ENCODE measurements at regions of chr6 and their contacts with region 1.

Region 1: DNA sequence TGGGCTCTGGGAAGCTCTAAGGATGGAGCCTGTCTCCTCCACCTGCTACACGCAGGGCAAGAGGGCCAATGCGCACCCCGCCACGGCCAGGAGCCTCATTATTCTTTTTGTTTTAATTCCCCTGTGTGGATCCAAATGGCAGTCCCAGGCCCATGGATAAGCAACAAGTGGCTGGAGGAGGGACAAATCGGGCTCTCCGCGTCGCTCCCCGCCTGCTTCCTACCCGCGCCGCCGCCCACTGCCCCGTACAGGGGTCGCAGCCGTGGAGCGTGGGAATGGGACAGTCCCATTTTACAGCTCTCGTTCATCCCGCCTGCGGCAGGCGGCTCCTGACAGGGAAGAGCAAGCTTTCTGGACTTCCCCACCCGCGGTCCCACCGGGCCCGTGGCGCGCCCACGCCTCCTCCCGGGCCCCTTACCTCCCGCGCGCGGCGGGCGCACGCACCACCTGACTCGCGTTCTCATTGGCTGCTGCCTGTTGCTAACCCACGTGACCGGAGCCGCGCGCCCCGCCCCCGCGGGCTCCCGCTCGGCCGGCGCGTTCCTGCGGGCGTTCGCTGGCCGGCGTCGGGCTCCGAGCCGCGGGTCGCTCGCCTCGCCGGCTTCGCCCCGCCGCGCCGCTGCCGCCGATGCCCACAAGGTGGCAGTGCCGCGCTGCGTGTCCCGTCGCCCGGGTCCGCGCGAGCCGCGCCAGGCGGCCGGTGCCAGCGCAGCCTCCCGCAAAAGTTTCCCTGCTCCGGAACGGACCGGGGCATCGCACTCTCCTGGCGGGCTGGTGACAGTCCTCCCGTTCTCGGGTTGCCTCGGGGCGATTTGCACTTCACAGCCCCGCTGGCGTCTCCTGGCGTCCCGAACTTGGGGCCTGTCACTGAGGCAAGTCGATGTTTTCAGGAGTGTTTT is 93.3 kb downstream of the CD83 start:
- DNase-seq: peak; percentile 96
- ATAC-seq: peak; percentile 91
- H3K4me3 ChIP-seq: peak overlapping the region; percentile 3 to 92 (median 82)
- H3K4me3 Mint-ChIP-seq: peak overlapping the region; percentile 90
- H3K27ac ChIP-seq: peak overlapping the region; percentile 92 to 97
- H3K27ac Mint-ChIP-seq: peak overlapping the region; percentile 97
- H3K4me1 ChIP-seq: peaks cover 30 to 33% of the 10 kb centered on the region in 2 donors
- H3K4me1 Mint-ChIP-seq: peaks cover 44% of the 10 kb centered on the region
- H3K27me3 ChIP-seq: no peaks in the 10 kb centered on the region
- H3K27me3 Mint-ChIP-seq: no peaks in the 10 kb centered on the region
- CTCF ChIP-seq: peak; percentile 72

Region 2: DNA sequence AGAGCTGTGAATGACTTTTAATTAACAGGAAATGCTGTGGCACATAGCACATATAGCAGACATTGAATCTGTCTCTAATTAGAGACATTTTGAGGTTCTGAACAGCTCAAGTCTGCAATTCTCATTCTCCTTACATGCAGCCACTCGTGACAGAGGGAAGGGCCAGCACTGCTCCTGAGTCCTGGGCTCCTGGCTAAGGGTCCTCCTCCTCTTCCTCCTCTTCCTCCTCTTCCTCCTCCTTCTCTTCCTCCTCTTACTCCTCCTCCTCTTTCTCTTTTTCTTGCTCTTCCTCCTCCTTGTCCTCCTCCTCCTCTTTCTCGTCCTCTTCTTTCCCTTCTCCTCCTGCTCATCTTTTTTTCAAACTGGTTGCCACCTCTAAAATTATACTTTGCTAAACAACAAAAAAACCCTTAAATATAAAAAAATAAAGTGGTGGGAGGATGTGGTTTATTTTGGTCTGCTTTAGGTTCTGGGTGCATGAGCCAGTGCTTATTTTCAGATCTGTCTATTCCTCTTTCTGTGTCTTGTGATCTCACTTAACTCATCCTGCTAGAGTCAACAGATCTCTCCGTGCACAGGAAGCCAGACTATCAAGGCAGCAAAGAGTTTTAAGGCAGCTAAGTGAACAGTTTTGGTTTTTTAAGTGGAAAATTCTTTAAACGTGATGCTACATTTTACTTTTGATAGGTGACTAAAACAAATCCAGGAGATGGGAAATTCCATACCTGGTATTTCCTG is 65.9 kb after region 1 on chr6:
- CTCF ChIA-PET with region 1: interaction called, 4 read pairs
- POLR2A ChIA-PET with region 1: no interaction called
- intact Hi-C with region 1: loop called (anchors 5 kb)
- DNase-seq: peak; percentile 82
- ATAC-seq: peak; percentile 92
- H3K4me3 ChIP-seq: peak overlapping the region in 4 of 5 experiments; percentile 19 to 50 (median 24)
- H3K4me3 Mint-ChIP-seq: peak overlapping the region; percentile 58
- H3K27ac ChIP-seq: peak overlapping the region; percentile 97 to 99
- H3K27ac Mint-ChIP-seq: peak overlapping the region; percentile 92
- H3K4me1 ChIP-seq: peaks cover 61 to 79% of the 10 kb centered on the region in 2 donors
- H3K4me1 Mint-ChIP-seq: peaks cover 75% of the 10 kb centered on the region
- H3K27me3 ChIP-seq: no peaks in the 10 kb centered on the region
- H3K27me3 Mint-ChIP-seq: no peaks in the 10 kb centered on the region
- CTCF ChIP-seq: no peak

Region 3: DNA sequence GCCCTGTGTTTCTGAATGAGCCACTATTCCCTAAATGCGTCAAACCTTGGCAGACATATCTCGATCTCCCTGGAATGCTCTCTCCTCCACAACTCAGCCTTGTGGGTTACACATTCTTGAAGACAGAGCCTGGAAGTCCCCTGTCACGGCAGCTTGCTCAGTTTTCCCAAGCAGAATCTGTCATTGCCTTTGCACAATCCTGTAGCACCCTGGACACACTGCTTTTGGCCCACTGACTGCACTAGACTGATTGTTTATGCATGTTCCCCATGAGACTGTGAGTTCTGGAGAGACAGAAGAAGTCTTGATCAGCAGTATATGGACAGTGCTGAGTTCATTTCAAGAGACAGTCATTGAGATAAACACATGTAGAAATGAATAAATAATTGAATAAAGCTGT is 313.4 kb after region 1 on chr6:
- CTCF ChIA-PET with region 1: no interaction called
- POLR2A ChIA-PET with region 1: no interaction called
- intact Hi-C with region 1: no loop called
- DNase-seq: no peak
- ATAC-seq: no peak
- H3K4me3 ChIP-seq: no peak overlapping the region
- H3K4me3 Mint-ChIP-seq: no peak overlapping the region
- H3K27ac ChIP-seq: no peak overlapping the region
- H3K27ac Mint-ChIP-seq: no peak overlapping the region
- H3K4me1 ChIP-seq: no peaks in the 10 kb centered on the region
- H3K4me1 Mint-ChIP-seq: peaks cover 1% of the 10 kb centered on the region
- H3K27me3 ChIP-seq: no peaks in the 10 kb centered on the region
- H3K27me3 Mint-ChIP-seq: no peaks in the 10 kb centered on the region
- CTCF ChIP-seq: no peak

Region 4: GRCh38 chr6:14638906-14639761 is 428.2 kb after region 1 on chr6:
- CTCF ChIA-PET with region 1: interaction called, 4 read pairs
- POLR2A ChIA-PET with region 1: interaction called, 4 read pairs
- intact Hi-C with region 1: loop called (anchors 1 kb)
- DNase-seq: peak; percentile 79
- ATAC-seq: peak; percentile 60
- H3K4me3 ChIP-seq: peak overlapping the region; percentile 21 to 74 (median 25)
- H3K4me3 Mint-ChIP-seq: peak overlapping the region; percentile 85
- H3K27ac ChIP-seq: peak overlapping the region; percentile 94
- H3K27ac Mint-ChIP-seq: peak overlapping the region; percentile 98
- H3K4me1 ChIP-seq: peaks cover 77 to 81% of the 10 kb centered on the region in 2 donors
- H3K4me1 Mint-ChIP-seq: peaks cover 87% of the 10 kb centered on the region
- H3K27me3 ChIP-seq: no peaks in the 10 kb centered on the region
- H3K27me3 Mint-ChIP-seq: no peaks in the 10 kb centered on the region
- CTCF ChIP-seq: no peak

Region 5: GRCh38 chr6:14903176-14904038 is 692.5 kb after region 1 on chr6:
- CTCF ChIA-PET with region 1: no interaction called
- POLR2A ChIA-PET with region 1: interaction called, 10 read pairs
- intact Hi-C with region 1: no loop called
- DNase-seq: peak; percentile 46
- ATAC-seq: peak; percentile 43
- H3K4me3 ChIP-seq: no peak overlapping the region
- H3K4me3 Mint-ChIP-seq: peak overlapping the region; percentile 17
- H3K27ac ChIP-seq: peak overlapping the region; percentile 36 to 57
- H3K27ac Mint-ChIP-seq: peak overlapping the region; percentile 59
- H3K4me1 ChIP-seq: peaks cover 16 to 18% of the 10 kb centered on the region in 2 donors
- H3K4me1 Mint-ChIP-seq: peaks cover 27% of the 10 kb centered on the region
- H3K27me3 ChIP-seq: no peaks in the 10 kb centered on the region
- H3K27me3 Mint-ChIP-seq: no peaks in the 10 kb centered on the region
- CTCF ChIP-seq: no peak

Region 6: GRCh38 chr6:15491255-15491985 is 1280.5 kb after region 1 on chr6:
- CTCF ChIA-PET with region 1: interaction called, 3 read pairs
- POLR2A ChIA-PET with region 1: no interaction called
- intact Hi-C with region 1: loop called (anchors 1 kb)
- DNase-seq: peak; percentile 77
- ATAC-seq: peak; percentile 77
- H3K4me3 ChIP-seq: no peak overlapping the region
- H3K4me3 Mint-ChIP-seq: no peak overlapping the region
- H3K27ac ChIP-seq: no peak overlapping the region
- H3K27ac Mint-ChIP-seq: peak overlapping the region; percentile 51
- H3K4me1 ChIP-seq: peaks cover 15 to 18% of the 10 kb centered on the region in 2 donors
- H3K4me1 Mint-ChIP-seq: peaks cover 33% of the 10 kb centered on the region
- H3K27me3 ChIP-seq: no peaks in the 10 kb centered on the region
- H3K27me3 Mint-ChIP-seq: no peaks in the 10 kb centered on the region
- CTCF ChIP-seq: peak; percentile 93

Measured in B cell (primary cell).